ENCODE measurements at regions of chr9 and their contacts with region 1.

Region 1: DNA sequence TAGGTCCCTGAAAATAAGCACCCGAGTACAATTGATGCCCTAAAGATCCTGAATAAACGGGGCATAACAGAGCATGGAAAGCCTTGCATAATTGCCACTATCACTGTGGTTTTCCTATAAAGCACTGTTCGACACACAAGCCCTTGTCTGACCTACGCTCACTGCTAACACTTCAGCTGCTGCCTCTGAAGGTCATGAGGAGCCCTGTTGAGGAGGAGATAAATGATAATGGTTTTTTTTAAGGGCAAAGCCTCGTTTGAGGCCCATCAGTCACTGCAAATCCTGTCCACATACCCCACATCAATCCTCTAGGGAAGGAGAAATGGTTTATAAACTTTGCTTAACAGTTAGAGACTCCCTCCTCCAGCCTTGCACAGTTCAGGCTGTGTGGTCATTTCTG is 35.1 kb downstream of the GABBR2 start:
- DNase-seq: no peak
- H3K4me3 ChIP-seq: no peak overlapping the region
- CTCF ChIP-seq: no peak

Region 2: DNA sequence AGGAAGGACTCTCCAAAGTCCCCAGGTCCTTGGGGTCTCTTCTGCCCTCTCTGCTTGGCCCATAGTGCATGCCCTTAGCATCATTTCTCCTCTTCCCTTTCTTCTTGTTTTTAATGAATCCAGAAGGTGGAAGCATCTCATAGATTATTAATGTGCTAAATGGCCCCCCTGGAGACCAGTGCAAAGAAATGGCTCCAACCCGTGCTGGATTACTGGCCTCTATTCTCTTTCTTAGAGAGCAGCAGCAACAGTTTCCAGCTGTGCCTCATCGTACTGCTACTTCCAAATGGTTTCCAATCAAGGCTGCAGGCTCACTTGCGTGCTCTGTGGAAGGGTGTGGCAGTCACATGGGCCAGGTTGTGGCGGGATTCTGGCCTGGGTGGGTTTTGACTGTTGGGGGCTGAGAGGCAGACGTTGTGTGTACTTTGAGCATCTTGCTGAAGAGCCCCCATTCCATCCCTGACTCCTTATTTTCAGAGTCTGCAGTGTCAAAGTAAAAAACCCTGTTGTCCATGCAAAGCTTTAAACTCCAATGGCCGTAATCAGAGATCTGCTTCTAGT is 104.7 kb before region 1 on chr9:
- in situ Hi-C with region 1: loop called (anchors 5 kb)
- DNase-seq: no peak
- H3K4me3 ChIP-seq: no peak overlapping the region
- CTCF ChIP-seq: no peak

Region 3: DNA sequence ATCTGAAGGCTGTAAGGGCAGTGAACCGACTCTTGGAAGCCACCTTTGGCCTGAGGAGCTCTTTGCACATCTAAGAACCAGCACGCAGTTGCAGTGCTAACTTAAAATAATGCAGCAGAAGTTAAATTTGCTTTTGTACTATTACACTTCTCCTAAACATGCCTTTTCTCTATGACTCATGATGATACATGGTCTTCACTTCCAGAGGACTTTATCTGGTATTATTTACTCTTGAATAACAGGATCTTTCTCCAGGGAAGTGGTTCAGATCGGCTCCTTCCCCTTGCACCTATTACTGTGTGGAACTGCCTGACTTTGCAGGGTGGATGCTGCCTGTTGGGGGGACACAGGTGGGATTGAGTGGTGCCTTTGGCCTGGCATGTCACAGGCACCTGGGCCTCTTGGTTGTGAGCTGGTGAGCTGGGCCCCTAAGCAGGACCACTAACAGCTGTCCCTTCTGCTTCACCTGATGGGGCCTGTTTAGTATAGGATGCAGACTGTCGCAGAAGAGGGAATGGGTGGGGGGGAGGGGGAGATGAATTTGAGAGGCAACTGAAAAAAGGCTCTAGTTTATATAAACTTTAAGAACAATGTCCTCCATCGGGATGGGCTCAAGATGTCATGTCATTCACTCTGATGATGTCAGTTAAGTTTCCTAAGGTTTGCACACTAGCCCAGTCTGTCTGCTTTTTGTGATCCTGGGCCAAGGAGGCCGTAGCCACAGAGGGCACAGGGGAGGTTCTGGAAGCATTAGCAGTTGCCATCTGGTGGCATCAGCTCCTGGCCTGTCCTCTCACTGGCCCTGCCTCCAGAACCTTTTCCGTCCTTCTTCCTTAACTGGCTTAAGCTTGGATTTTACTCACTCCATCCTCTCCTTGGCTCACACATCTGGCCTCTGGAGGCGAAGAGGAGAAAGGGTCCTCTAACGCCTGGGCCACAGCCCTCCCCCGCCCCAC is 68.9 kb after region 1 on chr9:
- in situ Hi-C with region 1: loop called (anchors 5 kb)
- DNase-seq: no peak
- H3K4me3 ChIP-seq: no peak overlapping the region
- CTCF ChIP-seq: no peak